Ovary (tissue), 10 donors: ENCODE measurements at regions of chr10 and their contacts with region 1.

Region 1: DNA sequence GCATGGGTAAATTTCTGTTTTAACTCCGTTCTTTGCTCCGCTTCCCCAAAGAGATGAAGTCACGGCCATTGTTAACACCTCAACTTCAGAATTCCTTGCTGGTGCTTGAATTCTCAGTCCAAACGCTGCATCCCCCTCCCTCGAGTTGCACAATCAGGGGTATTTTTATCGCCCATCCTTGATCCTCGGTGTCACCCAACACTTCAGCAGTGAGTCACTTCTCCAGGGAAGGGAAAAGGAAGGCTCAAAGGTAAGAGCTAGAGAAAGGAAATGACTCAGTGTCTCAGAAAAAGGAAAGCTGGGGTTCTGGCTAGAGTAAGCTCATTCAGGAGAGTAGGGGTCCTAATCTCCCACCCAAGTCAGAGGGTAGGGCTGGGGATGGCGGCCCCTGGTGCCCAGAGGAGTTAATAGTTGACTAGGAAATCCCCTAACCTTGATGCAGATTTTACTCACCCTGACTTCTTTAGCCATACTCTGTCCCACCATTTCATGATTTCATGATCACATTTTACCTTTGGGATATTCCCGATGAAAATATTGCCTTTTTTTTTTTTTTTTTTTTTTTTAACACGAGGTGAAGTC is 39.8 kb upstream of the TRIM8 start:
- DNase-seq: peak in 2 of 5 donors; percentile 47 to 68
- H3K4me3 ChIP-seq: no peak overlapping the region
- H3K27ac ChIP-seq: peak overlapping the region in 1 of 2 donors; percentile 81
- H3K4me1 ChIP-seq: peaks cover 6% of the 10 kb centered on the region
- H3K27me3 ChIP-seq: no peaks in the 10 kb centered on the region
- CTCF ChIP-seq: no peak
- EP300 ChIP-seq: no peak
- POLR2A ChIP-seq: no peak

Region 2: DNA sequence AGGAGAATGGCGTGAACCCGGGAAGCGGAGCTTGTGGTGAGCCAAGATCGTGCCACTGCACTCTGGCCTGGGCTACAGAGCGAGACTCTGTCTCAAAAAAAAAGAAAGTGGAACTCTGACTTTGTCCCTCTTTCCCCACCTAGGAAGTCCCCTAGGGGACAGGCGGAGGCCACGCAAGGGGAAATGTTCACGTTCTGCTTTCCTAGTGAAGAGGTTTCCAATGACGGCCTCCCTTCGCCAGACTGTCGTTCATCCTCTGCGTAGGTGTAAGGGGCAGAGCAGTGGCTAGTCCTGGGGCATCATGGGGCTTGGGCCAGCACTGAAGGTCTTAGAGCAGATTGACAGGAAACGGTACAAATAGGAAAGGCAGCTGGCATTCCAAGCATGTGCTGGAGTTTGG is 70.1 kb before region 1 on chr10:
- intact Hi-C with region 1: loop called in 1 of 4 experiments (anchors 2 kb)
- DNase-seq: peak in 1 of 5 donors; percentile 5
- H3K4me3 ChIP-seq: no peak overlapping the region
- H3K27ac ChIP-seq: no peak overlapping the region
- H3K4me1 ChIP-seq: no peaks in the 10 kb centered on the region
- H3K27me3 ChIP-seq: no peaks in the 10 kb centered on the region
- CTCF ChIP-seq: no peak
- EP300 ChIP-seq: no peak
- POLR2A ChIP-seq: no peak

Region 3: GRCh38 chr10:102635377-102635776 is 30.9 kb after region 1 on chr10:
- intact Hi-C with region 1: loop called in 1 of 4 experiments (anchors 5 kb)
- DNase-seq: no peak
- H3K4me3 ChIP-seq: no peak overlapping the region
- H3K27ac ChIP-seq: no peak overlapping the region
- H3K4me1 ChIP-seq: peaks cover 19% of the 10 kb centered on the region
- H3K27me3 ChIP-seq: no peaks in the 10 kb centered on the region
- CTCF ChIP-seq: no peak
- EP300 ChIP-seq: no peak
- POLR2A ChIP-seq: no peak